Astrocyte of the cerebellum (primary cell): ENCODE measurements at regions of chr10 and their contacts with region 1.

Region 1: DNA sequence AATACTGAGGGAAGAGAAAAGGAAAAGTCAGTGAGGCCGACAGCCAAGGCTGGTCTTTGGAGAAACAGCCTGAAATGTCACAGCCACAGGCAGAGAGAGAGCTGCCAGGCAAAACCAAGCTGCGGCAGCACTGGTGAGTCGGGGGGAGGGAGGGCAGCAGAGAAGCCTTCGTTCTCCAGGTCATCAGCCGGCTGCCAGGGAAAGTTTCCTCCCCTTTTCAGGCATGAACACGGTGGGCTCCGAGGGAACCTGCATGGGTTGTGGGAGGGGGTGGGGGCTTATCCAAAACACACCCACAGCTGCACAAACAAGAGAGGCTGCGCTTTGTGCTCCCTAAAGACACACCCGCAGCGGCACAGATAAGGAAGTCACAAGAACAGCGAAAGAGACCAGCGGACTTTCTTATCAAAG is 62.3 kb upstream of the NKX6-2 start:
- DNase-seq: no peak
- H3K4me3 ChIP-seq: no peak overlapping the region
- CTCF ChIP-seq: no peak

Region 2: GRCh38 chr10:132808383-132809231 is 39.7 kb before region 1 on chr10:
- in situ Hi-C with region 1: no loop called
- DNase-seq: no peak
- H3K4me3 ChIP-seq: no peak overlapping the region
- CTCF ChIP-seq: no peak

Region 3: DNA sequence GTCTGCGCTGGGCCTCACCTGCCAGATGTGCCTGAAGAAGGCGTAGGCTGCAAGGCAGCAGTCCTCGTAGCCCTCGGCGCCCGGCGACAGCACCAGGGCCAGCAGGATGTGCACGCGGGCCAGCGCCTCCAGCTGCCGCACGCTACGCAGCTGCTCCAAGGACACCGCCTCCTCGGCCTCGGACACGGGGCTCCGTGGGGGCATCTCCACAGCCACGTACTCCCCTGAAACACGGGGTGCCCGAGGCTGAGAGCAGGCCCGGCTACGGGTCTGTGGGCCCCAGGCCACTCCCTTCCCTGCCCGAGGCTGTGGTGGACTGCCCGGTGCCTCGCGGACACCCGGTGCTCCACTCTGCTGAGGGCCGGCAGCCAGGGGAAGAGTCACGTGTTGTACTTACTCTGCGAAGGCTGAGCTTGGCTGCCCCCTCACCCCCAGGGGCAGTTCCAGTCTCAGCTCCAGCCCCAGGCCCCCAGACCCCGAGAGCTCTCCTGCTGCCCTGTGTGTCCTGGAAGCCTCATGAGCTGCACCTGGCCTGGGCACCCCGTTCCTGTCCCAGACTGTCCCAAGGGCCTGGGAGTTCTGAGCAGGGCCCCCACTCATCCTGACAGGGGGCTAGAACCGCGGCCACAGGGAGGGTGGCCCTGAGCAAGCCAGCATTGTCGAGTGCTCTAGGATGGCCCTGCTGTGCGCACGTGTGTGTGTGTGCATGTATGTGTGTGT is 31.3 kb after region 1 on chr10:
- in situ Hi-C with region 1: loop called (anchors 5 kb)
- DNase-seq: no peak
- H3K4me3 ChIP-seq: no peak overlapping the region
- CTCF ChIP-seq: no peak